ENCODE measurements at regions of chr22 and their contacts with region 1.

Region 1: GRCh38 chr22:24244101-24244787 is 638 bp downstream of the GGT5 start:
- DNase-seq: peak; percentile 74
- ATAC-seq: peak; percentile 50
- H3K4me3 ChIP-seq: peak overlapping the region; percentile 47
- H3K27ac ChIP-seq: peak overlapping the region; percentile 90
- H3K4me1 ChIP-seq: peaks cover 49% of the 10 kb centered on the region
- H3K27me3 ChIP-seq: no peaks in the 10 kb centered on the region
- CTCF ChIP-seq: no peak

Region 2: DNA sequence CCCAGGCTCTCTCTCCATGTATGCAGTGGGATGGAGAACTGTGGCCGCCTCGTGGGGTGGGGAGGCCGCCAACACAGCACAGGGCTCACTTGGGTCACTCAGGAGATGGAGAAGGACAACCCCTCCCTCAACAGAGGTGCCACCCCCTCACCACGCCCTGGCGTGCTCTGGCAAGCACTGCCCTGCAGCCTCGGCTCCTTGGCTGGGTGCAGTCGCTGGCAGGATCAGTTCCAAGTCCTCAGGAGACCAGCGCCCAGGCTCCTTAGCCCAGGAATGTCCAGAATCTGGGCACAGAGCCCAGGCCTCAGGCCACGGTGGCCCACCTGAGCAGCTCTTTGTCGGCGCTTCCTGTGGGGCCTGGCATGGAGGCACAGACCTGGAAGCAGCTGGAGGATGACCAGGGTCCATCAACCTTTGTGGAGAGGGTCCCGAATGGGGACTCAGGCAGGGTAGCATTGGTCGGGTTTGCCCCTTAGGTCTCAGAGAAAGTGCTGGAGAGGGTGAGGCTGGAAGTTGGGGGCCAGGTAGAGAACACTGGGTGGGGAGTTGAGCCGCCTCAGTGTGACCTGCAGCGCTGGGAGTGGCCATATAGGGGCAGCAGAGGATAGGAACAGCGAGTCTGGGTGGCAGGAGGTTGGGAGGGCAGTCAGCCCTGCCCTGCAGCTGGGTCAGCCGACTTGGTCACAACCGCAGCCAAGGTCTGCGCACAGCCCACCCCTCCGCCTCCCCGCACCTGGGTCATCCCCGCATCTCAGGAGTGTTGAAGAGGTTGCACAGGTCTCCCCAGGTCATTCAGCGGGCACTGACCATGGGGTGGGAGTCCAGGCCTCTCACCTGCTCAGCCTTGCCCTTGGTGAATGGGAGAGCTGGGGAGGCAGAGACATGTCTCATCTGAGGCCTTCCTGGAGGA is 54.7 kb before region 1 on chr22:
- intact Hi-C with region 1: loop called (anchors 10 kb)
- DNase-seq: peak; percentile 93
- ATAC-seq: peak; percentile 92
- H3K4me3 ChIP-seq: no peak overlapping the region
- H3K27ac ChIP-seq: peak overlapping the region; percentile 51
- H3K4me1 ChIP-seq: peaks cover 16% of the 10 kb centered on the region
- H3K27me3 ChIP-seq: no peaks in the 10 kb centered on the region
- CTCF ChIP-seq: peak; percentile 87

Region 3: GRCh38 chr22:24289114-24289513 is 44.9 kb after region 1 on chr22:
- intact Hi-C with region 1: no loop called
- DNase-seq: no peak
- ATAC-seq: peak; percentile 50
- H3K4me3 ChIP-seq: peak overlapping the region; percentile 1
- H3K27ac ChIP-seq: peak overlapping the region; percentile 61
- H3K4me1 ChIP-seq: peaks cover 49% of the 10 kb centered on the region
- H3K27me3 ChIP-seq: no peaks in the 10 kb centered on the region
- CTCF ChIP-seq: no peak